ENCODE measurements at regions of chr11 and their contacts with region 1.

Region 1: DNA sequence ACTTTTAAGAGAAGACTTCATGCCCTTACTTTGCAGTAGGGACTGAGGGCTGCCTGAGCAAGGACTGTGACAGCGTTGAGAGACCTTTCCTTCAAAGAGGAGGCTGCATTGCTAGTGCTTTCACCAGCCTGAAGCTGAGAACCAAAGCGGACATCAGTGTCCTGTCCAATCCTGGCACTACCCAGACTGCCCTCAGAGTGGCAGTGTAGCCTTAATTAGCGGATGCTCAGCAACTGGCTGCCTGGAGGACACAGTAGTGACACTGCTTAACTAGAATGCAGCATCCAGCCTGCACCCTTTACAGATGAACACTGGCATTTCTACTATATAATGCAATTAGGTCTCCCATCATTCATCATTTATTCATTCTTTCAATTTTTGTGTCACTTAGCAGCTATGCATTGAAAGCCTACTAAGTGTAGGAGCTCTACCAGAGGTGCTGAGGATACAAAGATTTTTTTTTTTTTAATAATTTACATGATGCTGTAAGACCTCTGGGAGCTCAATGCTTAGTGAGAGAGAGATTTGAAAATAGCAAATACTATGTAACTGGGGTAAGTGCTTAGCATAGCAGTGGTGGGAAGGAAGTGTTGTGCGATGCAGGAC is 36.9 kb upstream of the SLC36A4 start:
- DNase-seq: peak; percentile 80
- ATAC-seq: peak; percentile 98
- H3K4me3 Mint-ChIP-seq: no peak overlapping the region
- H3K27ac Mint-ChIP-seq: no peak overlapping the region
- H3K4me1 Mint-ChIP-seq: no peaks in the 10 kb centered on the region
- H3K27me3 Mint-ChIP-seq: peaks cover 31% of the 10 kb centered on the region

Region 2: DNA sequence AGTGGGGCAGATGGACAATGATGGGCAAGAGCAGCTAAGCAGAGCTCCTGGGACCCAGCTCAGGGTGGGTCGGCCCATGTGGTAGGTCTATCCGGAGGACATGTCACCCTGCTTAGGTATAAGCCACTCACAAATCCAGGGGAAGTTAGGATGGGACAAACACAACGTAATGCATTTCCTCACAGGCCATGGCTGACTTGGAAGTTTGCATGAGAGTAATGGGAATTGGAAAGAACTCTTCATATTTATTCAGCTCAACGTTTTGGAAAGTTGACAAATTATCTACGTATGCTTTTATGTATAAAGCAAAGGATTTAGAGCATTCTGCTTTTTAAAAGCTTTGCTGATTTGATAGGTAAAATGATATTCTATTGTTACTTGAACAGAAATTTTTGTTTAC is 233.6 kb after region 1 on chr11:
- CTCF ChIA-PET with region 1: no interaction called
- DNase-seq: no peak
- ATAC-seq: no peak
- H3K4me3 Mint-ChIP-seq: no peak overlapping the region
- H3K27ac Mint-ChIP-seq: no peak overlapping the region
- H3K4me1 Mint-ChIP-seq: no peaks in the 10 kb centered on the region
- H3K27me3 Mint-ChIP-seq: no peaks in the 10 kb centered on the region

Region 3: GRCh38 chr11:93652161-93652597 is 417.5 kb after region 1 on chr11:
- CTCF ChIA-PET with region 1: interaction called, 22 read pairs
- DNase-seq: no peak
- ATAC-seq: no peak
- H3K4me3 Mint-ChIP-seq: no peak overlapping the region
- H3K27ac Mint-ChIP-seq: no peak overlapping the region
- H3K4me1 Mint-ChIP-seq: peaks cover 21% of the 10 kb centered on the region
- H3K27me3 Mint-ChIP-seq: peaks cover 10% of the 10 kb centered on the region

Measured in activated CD8-positive, alpha-beta memory T cell treated with anti-CD3 and anti-CD28 coated beads, Interleukin-2, amount 10 ng/mL, durations not matched to agents 7 days and 5 days (primary cell).